PC-3 (cell line): ENCODE measurements at regions of chr7 and their contacts with region 1.

Region 1: GRCh38 chr7:112550468-112551060 is 69.8 kb downstream of the LSMEM1 start:
- DNase-seq: peak; percentile 82
- ATAC-seq: peak; percentile 77
- H3K4me3 ChIP-seq: no peak overlapping the region
- H3K27ac ChIP-seq: no peak overlapping the region
- H3K4me1 ChIP-seq: no peaks in the 10 kb centered on the region
- H3K27me3 ChIP-seq: peaks cover 4% of the 10 kb centered on the region
- CTCF ChIP-seq: peak; percentile 93

Region 2: DNA sequence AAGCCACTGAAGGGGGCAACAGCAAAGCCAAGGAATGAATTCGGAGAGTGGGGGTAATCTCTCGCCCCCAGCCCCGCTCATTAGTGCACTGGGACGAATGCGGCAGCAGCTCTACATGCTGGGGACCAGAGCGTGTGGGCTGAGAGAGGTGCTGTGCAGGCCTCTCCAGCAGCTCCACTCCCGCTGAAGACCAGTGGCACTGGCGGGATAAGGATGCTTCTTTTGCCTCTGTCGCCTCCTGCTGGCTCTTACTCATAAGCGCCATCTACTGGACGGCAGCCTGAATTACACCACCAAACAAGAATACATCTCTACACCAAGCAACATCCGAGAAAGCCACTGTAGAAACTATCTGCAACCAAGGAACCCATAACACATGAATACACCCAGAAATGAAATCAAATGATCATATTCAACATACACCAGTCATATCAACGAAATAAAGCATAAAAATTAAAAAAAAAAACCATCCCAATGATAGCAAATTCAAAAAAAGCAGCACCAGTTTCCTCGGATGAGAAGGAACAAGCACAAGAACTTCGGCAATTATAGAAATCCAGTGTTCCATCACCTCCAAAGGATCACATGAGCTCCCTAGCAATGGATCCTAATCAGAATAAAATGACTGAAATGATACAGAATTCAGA is 318.7 kb after region 1 on chr7:
- CTCF ChIA-PET with region 1: no interaction called
- POLR2A ChIA-PET with region 1: no interaction called
- intact Hi-C with region 1: loop called (anchors 1 kb)
- DNase-seq: peak; percentile 74
- ATAC-seq: peak; percentile 88
- H3K4me3 ChIP-seq: no peak overlapping the region
- H3K27ac ChIP-seq: no peak overlapping the region
- H3K4me1 ChIP-seq: no peaks in the 10 kb centered on the region
- H3K27me3 ChIP-seq: no peaks in the 10 kb centered on the region
- CTCF ChIP-seq: peak; percentile 96

Region 3: DNA sequence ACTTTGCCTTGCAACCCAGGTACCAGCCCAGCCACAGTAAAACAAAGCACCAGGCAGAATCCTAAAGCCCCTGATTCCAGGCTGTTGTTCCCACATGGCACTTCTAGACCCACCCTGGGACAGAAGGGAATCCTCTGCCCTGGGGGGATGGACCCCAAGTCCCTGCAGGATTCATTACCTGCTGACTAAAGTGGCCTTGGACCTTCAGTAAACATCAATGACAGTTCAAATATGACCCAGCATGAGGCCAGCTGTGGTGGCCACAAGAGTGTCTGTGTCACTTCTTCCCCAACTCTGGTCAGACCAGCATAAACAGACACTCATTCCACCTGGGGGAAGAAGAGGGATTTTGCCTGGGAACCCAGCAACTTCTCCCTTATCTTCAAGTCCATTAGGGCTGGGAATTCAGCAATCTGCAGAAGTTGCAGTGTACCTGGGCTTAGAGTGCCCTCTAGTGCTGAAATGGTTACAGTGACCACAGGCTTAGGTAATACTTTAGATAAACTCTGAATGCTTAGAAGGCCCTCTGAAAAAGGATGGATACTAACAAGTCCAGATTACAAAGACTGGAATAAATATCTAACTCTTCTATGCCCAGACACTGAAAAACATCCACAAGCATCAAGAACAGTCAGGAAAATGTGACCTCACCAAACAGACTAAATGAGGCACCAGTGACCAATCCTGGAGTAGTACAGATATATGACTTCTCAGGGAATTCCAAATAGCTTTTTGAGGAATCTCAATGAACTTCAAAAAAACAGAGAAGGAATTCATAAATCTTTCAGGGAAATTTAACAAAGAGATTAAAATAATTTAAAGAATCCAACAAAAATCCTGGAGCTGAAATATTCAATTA is 348.1 kb after region 1 on chr7:
- CTCF ChIA-PET with region 1: no interaction called
- POLR2A ChIA-PET with region 1: no interaction called
- intact Hi-C with region 1: loop called (anchors 1 kb)
- DNase-seq: peak; percentile 78
- ATAC-seq: peak; percentile 91
- H3K4me3 ChIP-seq: no peak overlapping the region
- H3K27ac ChIP-seq: no peak overlapping the region
- H3K4me1 ChIP-seq: no peaks in the 10 kb centered on the region
- H3K27me3 ChIP-seq: no peaks in the 10 kb centered on the region
- CTCF ChIP-seq: peak; percentile 85

Region 4: GRCh38 chr7:113289140-113289740 is 738.7 kb after region 1 on chr7:
- CTCF ChIA-PET with region 1: interaction called, 3 read pairs
- POLR2A ChIA-PET with region 1: no interaction called
- intact Hi-C with region 1: loop called (anchors 1 kb)
- DNase-seq: peak; percentile 56
- ATAC-seq: peak; percentile 88
- H3K4me3 ChIP-seq: no peak overlapping the region
- H3K27ac ChIP-seq: no peak overlapping the region
- H3K4me1 ChIP-seq: no peaks in the 10 kb centered on the region
- H3K27me3 ChIP-seq: no peaks in the 10 kb centered on the region
- CTCF ChIP-seq: peak; percentile 53

Region 5: GRCh38 chr7:113698556-113699220 is 1148.1 kb after region 1 on chr7:
- CTCF ChIA-PET with region 1: no interaction called
- POLR2A ChIA-PET with region 1: no interaction called
- intact Hi-C with region 1: loop called (anchors 5 kb)
- DNase-seq: peak; percentile 56
- ATAC-seq: no peak
- H3K4me3 ChIP-seq: no peak overlapping the region
- H3K27ac ChIP-seq: no peak overlapping the region
- H3K4me1 ChIP-seq: no peaks in the 10 kb centered on the region
- H3K27me3 ChIP-seq: no peaks in the 10 kb centered on the region
- CTCF ChIP-seq: peak; percentile 76